ENCODE measurements at regions of chr10 and their contacts with region 1.

Region 1: DNA sequence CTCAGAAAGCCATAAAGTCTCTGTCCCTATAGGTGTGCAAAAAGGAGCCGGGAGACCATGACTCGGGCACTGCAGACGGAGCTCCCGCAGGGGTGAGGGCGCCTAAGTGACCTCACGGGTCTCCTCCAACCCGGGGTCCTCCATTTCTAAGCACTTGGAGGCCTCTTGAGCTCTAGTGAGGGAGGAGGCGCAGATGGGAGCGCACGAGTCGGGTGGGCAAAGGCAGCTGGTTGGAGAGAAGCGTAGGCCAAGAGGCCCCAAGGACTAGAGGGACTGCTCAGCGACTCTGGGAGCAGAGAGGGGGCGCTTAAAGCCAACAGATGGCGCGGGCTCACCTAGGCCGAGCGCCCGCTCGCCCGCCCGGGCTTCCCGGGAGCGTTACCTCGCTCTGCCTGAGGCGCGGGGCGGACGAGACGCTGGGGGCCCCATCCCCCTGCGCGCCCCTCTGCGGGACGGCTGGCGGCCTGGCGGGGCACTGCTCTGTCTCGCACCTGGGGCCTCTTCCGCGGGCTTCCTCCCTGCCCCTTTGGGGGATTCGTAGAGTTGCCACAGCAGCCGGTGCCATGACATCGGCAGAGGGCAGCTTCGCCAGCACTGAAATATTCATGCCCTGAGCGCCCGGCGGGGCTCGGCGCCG is 518 bp upstream of the CDH23 start:
- DNase-seq: peak; percentile 36 to 43
- ATAC-seq: peak; percentile 71 to 76
- H3K4me3 ChIP-seq: peak overlapping the region; percentile 45 to 69 (median 57)
- H3K27ac ChIP-seq: peak overlapping the region in 1 of 4 donors; percentile 40
- H3K4me1 ChIP-seq: peaks cover 7 to 10% of the 10 kb centered on the region in 2 donors
- H3K27me3 ChIP-seq: peaks cover 23 to 41% (median 38%) of the 10 kb centered on the region in 3 donors
- CTCF ChIP-seq: peak; percentile 52 to 70 (median 55)
- POLR2A ChIP-seq: no peak

Region 2: DNA sequence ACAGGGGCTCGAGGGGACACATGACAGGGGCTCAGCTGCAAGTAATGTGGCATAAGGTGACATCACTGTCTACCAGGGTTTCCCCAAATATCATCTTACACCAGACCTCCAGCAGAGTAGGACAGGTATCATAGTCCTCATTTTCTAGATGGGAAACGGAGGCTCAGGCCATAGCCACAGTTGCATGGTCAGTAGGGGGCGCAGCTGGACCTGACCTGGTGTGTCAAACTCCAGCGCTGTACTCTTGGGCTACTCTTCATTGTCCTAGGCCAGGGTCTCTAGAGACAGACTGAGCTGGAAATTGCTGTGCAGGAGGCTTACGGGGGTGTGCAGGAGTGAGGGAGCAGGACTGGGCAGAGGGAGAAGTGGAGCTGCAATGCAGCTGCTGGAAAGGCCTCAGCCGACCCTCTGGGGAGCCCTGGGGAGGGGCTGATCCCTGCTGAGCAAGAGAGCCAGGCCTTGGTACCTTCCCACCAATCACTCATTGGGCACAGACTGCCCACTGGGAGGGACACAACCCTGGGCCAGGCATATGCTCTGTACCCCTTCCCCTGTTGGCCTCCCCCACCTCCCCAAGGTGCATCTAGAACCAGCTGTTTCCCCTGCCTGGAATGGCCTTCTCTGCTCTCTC is 90.4 kb after region 1 on chr10:
- in situ Hi-C with region 1: no loop called
- intact Hi-C with region 1: loop called (anchors 5 kb)
- DNase-seq: no peak
- ATAC-seq: peak in 1 of 2 donors; percentile 33
- H3K4me3 ChIP-seq: no peak overlapping the region
- H3K27ac ChIP-seq: no peak overlapping the region
- H3K4me1 ChIP-seq: no peaks in the 10 kb centered on the region
- H3K27me3 ChIP-seq: no peaks in the 10 kb centered on the region
- CTCF ChIP-seq: peak in 3 of 5 experiments; percentile 32 to 37 (median 37)
- POLR2A ChIP-seq: no peak

Region 3: DNA sequence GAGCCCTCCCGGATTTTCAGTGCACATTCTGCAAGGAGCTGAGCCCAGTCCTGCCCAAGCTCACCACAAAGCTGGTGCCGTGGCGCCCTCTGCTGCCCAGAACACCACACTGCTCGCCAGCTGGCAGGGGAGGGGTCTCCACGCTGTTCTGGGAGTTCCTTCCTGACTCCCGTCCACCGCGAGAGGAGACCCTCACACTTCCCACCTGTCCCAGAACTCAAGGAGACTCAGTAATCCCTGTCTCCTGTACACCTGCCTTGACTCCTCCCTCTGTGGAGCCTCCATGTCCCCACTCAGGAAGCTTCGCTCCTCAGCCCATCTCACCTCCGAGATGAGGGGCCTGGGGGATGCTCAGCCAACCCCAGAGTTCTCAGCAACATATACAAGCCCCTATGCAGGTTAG is 312.1 kb after region 1 on chr10:
- in situ Hi-C with region 1: no loop called
- intact Hi-C with region 1: loop called (anchors 5 kb)
- DNase-seq: no peak
- ATAC-seq: no peak
- H3K4me3 ChIP-seq: no peak overlapping the region
- H3K27ac ChIP-seq: no peak overlapping the region
- H3K4me1 ChIP-seq: peaks cover 11 to 14% of the 10 kb centered on the region in 2 donors
- H3K27me3 ChIP-seq: no peaks in the 10 kb centered on the region
- CTCF ChIP-seq: peak; percentile 71 to 84 (median 75)
- POLR2A ChIP-seq: no peak